ENCODE measurements at regions of chr15 and their contacts with region 1.

Region 1: DNA sequence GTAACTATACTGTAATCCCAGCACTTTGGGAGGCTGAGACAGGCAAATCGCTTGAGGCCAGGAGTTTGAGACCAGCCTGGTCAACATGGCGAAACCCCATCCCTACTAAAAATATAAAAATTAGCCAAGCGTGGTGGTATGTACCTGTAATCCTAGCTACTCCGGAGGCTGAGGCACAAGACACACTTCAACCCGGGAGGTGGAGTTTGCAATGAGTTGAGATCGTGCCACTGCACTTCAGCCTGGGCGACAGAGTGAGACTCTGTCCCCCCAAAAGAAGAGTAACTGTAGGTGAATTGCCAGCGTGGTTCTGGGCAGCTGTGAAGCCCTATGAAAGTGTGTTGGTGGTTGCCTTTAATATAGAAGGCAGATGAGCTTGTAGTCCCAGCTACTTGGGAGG is 95.9 kb downstream of the SLCO3A1 start:
- DNase-seq: no peak
- H3K4me3 ChIP-seq: no peak overlapping the region
- H3K27ac ChIP-seq: peak overlapping the region in 1 of 2 donors; percentile 14
- H3K4me1 ChIP-seq: peaks cover 7 to 15% of the 10 kb centered on the region in 2 donors
- H3K27me3 ChIP-seq: no peaks in the 10 kb centered on the region
- CTCF ChIP-seq: no peak
- POLR2A ChIP-seq: no peak

Region 2: GRCh38 chr15:91938136-91938535 is 11.2 kb before region 1 on chr15:
- intact Hi-C with region 1: loop called (anchors 1 kb)
- DNase-seq: no peak
- H3K4me3 ChIP-seq: no peak overlapping the region
- H3K27ac ChIP-seq: peak overlapping the region in 1 of 2 donors; percentile 17
- H3K4me1 ChIP-seq: peaks cover 7 to 18% of the 10 kb centered on the region in 2 donors
- H3K27me3 ChIP-seq: no peaks in the 10 kb centered on the region
- CTCF ChIP-seq: no peak
- POLR2A ChIP-seq: no peak